ENCODE measurements at regions of chr16 and their contacts with region 1.

Region 1: GRCh38 chr16:74984535-74985296 is at the start of gene WDR59:
- DNase-seq: peak; percentile 95 to 100 (median 96)
- ATAC-seq: peak; percentile 98
- H3K4me3 ChIP-seq: peak within 1 kb of the TSS; percentile 89
- H3K27ac ChIP-seq: peak within 1 kb of the TSS; percentile 85
- H3K4me1 ChIP-seq: peaks cover 17 to 31% of the 10 kb centered on the region in 2 experiments
- H3K27me3 ChIP-seq: no peaks in the 10 kb centered on the region
- CTCF ChIP-seq: no peak
- EP300 ChIP-seq: no peak
- POLR2A ChIP-seq: peak; percentile 85
- RAD21 ChIP-seq: no peak
- polyA plus RNA-seq, gene WDR59: 12.7 to 16.2 TPM

Region 2: DNA sequence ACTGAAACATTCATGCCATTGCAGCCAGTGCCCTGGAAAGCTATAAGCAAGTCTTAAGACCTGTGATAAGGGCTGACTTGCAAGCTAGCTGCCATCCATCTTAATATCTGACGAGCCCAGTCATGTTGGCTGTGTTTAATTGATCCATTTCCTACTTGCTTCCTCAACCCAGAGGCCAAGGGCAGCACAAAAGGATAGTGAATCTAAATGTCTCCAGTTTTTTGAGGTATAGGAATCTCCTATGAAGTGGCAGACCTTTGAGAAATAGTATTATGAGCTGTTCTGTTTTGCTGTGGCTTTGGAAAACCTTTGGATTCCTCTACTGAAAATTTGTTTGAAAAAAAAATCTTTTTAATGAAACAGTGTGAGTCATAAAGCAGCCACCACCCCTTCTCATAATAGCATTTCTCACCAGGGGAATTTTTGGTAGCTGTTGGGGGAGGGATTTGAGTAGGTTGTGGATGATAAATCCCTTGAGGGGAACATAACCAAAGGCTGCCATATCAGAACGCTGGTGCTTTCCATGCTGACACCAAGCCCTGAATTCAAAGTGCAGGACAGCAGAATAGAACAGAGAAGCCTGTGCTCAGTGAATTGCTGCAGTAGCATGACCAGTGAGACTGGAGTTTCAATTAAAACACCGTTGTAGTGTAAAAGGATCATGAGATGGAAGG is 27.1 kb after region 1 on chr16:
- CTCF ChIA-PET with region 1: no interaction called
- POLR2A ChIA-PET with region 1: interaction called, 12 read pairs
- in situ Hi-C with region 1: no loop called
- intact Hi-C with region 1: no loop called
- DNase-seq: peak in 2 of 4 experiments; percentile 43 to 63
- ATAC-seq: peak; percentile 51
- H3K4me3 ChIP-seq: no peak overlapping the region
- H3K27ac ChIP-seq: peak overlapping the region; percentile 82
- H3K4me1 ChIP-seq: peaks cover 22 to 36% of the 10 kb centered on the region in 2 experiments
- H3K27me3 ChIP-seq: no peaks in the 10 kb centered on the region
- CTCF ChIP-seq: no peak
- EP300 ChIP-seq: no peak
- POLR2A ChIP-seq: no peak
- RAD21 ChIP-seq: no peak

Region 3: GRCh38 chr16:75198135-75198600 is 213.5 kb after region 1 on chr16:
- CTCF ChIA-PET with region 1: no interaction called
- POLR2A ChIA-PET with region 1: no interaction called
- in situ Hi-C with region 1: no loop called
- intact Hi-C with region 1: no loop called
- DNase-seq: peak in 1 of 4 experiments; percentile 20
- ATAC-seq: peak; percentile 30
- H3K4me3 ChIP-seq: no peak overlapping the region
- H3K27ac ChIP-seq: no peak overlapping the region
- H3K4me1 ChIP-seq: peaks cover 0 to 8% of the 10 kb centered on the region in 2 experiments; a peak in 3 of 5 replicates
- H3K27me3 ChIP-seq: peaks cover 39 to 46% of the 10 kb centered on the region in 2 experiments
- CTCF ChIP-seq: no peak
- EP300 ChIP-seq: no peak
- POLR2A ChIP-seq: no peak
- RAD21 ChIP-seq: no peak